ENCODE measurements at regions of chr19 and their contacts with region 1.

Region 1: DNA sequence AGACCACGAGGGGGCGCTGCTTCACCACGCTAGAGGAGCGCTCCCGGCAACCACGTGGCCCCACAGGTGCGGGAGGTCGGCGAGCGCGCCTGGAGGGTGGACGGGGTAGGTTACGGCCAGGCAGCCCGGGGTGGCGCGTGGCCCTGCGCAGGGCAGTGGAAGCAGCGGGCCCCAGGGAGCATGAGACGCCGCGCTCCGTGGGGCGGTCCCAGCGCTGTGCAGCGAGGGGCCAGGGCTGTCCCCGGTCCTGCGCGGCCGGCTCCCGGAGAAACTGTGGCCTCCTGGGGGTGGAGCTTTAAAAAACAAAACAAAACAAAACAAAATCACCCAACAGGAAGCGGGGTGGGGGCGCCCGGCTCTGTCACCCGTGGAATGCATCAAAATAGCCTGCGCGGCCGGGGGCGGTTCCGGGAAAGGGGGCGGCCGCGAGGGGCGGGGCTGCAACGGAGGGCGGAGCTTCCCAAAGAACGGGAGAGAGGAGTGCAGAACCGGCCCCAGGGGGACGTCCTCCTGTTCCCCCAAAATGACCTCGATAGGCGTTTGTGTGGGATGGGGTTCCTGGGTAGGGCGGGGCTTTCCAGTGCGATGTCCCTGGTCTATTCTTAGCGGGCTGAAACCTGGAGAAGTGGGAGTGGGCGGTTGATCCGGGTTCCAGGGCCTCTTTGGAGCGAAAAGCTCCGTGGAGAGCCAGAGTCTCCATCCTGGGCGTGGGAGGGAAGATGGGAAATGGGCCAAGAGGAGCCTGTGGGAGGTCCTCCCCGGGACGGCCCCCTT is 27.3 kb downstream of the NUMBL start:
- DNase-seq: peak; percentile 87 to 94 (median 91)
- H3K4me3 ChIP-seq: peak overlapping the region; percentile 52 to 75
- H3K4me3 Mint-ChIP-seq: peak overlapping the region; percentile 82 to 90 (median 86)
- H3K27ac ChIP-seq: peak overlapping the region; percentile 49
- H3K27ac Mint-ChIP-seq: peak overlapping the region; percentile 74 to 95 (median 90)
- H3K4me1 ChIP-seq: peaks cover 16% of the 10 kb centered on the region
- H3K4me1 Mint-ChIP-seq: peaks cover 4 to 14% (median 6%) of the 10 kb centered on the region in 4 donors
- H3K27me3 ChIP-seq: no peaks in the 10 kb centered on the region
- H3K27me3 Mint-ChIP-seq: no peaks in the 10 kb centered on the region

Region 2: GRCh38 chr19:40690693-40691420 is 27.7 kb after region 1 on chr19:
- CTCF ChIA-PET with region 1: no interaction called
- POLR2A ChIA-PET with region 1: interaction called, 13 read pairs
- intact Hi-C with region 1: no loop called
- DNase-seq: peak; percentile 78 to 85 (median 80)
- H3K4me3 ChIP-seq: peak overlapping the region; percentile 66 to 73
- H3K4me3 Mint-ChIP-seq: peak overlapping the region; percentile 85 to 94 (median 90)
- H3K27ac ChIP-seq: peak overlapping the region; percentile 60
- H3K27ac Mint-ChIP-seq: peak overlapping the region; percentile 61 to 97 (median 92)
- H3K4me1 ChIP-seq: peaks cover 8% of the 10 kb centered on the region
- H3K4me1 Mint-ChIP-seq: peaks cover 2 to 6% (median 4%) of the 10 kb centered on the region in 4 donors
- H3K27me3 ChIP-seq: no peaks in the 10 kb centered on the region
- H3K27me3 Mint-ChIP-seq: no peaks in the 10 kb centered on the region

Region 3: GRCh38 chr19:40750059-40750873 is 87.2 kb after region 1 on chr19 and contains the start of gene ACTMAP:
- CTCF ChIA-PET with region 1: interaction called, 6 read pairs
- POLR2A ChIA-PET with region 1: interaction called, 12 read pairs
- intact Hi-C with region 1: loop called (anchors 1 kb)
- DNase-seq: peak; percentile 100
- H3K4me3 ChIP-seq: peak within 1 kb of the TSS; percentile 81 to 98
- H3K4me3 Mint-ChIP-seq: peak within 1 kb of the TSS; percentile 95 to 100 (median 98)
- H3K27ac ChIP-seq: peak within 1 kb of the TSS; percentile 86
- H3K27ac Mint-ChIP-seq: peak within 1 kb of the TSS; percentile 89 to 99 (median 99)
- H3K4me1 ChIP-seq: peaks cover 42% of the 10 kb centered on the region
- H3K4me1 Mint-ChIP-seq: peaks cover 22 to 50% (median 31%) of the 10 kb centered on the region in 4 donors
- H3K27me3 ChIP-seq: no peaks in the 10 kb centered on the region
- H3K27me3 Mint-ChIP-seq: no peaks in the 10 kb centered on the region
- total RNA-seq, gene ACTMAP: 5.2 to 5.5 TPM

Region 4: DNA sequence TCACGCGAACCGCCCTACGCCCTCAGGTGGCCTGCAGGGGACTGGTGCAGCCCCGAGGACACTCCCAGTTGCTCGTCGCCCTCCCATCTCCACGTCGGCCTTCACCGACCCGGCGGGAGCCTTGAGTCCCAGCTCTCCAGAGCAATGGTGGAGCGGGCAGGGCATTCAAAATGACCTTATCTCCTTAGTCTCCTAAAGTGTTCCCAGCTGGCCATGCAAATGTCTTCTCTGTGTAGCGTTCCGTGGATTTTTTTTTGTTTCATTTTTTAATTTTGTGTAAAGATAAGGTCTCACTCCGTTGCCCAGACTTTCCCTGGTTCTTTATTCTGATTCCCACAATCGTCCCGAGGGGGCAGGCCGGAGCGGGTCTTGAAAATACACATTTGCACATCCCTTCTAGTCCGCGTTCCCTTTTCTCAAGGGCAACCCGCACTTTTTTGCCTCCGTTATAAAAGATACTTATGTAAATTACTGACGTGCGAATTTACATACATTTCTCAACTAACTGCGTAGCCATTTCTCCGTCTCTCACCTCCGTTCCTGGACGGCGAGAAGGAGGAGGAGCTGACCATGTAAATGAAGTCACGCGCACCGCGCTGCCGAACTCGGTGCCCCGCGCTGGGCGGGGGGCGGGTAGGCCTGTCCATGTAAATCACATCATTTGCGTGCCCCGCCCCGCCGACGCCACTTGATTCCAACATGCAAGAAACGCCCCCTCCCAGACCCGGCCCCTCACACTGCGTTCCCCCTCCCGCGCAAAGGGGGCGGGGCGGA is 135.3 kb after region 1 on chr19:
- CTCF ChIA-PET with region 1: interaction called, 8 read pairs
- POLR2A ChIA-PET with region 1: interaction called, 21 read pairs
- intact Hi-C with region 1: no loop called
- DNase-seq: peak; percentile 100
- H3K4me3 ChIP-seq: peak overlapping the region; percentile 55 to 86
- H3K4me3 Mint-ChIP-seq: peak overlapping the region; percentile 92 to 99 (median 96)
- H3K27ac ChIP-seq: peak overlapping the region; percentile 82
- H3K27ac Mint-ChIP-seq: peak overlapping the region; percentile 98 to 100 (median 99)
- H3K4me1 ChIP-seq: peaks cover 47% of the 10 kb centered on the region
- H3K4me1 Mint-ChIP-seq: peaks cover 30 to 55% (median 41%) of the 10 kb centered on the region in 4 donors
- H3K27me3 ChIP-seq: no peaks in the 10 kb centered on the region
- H3K27me3 Mint-ChIP-seq: no peaks in the 10 kb centered on the region

Region 5: DNA sequence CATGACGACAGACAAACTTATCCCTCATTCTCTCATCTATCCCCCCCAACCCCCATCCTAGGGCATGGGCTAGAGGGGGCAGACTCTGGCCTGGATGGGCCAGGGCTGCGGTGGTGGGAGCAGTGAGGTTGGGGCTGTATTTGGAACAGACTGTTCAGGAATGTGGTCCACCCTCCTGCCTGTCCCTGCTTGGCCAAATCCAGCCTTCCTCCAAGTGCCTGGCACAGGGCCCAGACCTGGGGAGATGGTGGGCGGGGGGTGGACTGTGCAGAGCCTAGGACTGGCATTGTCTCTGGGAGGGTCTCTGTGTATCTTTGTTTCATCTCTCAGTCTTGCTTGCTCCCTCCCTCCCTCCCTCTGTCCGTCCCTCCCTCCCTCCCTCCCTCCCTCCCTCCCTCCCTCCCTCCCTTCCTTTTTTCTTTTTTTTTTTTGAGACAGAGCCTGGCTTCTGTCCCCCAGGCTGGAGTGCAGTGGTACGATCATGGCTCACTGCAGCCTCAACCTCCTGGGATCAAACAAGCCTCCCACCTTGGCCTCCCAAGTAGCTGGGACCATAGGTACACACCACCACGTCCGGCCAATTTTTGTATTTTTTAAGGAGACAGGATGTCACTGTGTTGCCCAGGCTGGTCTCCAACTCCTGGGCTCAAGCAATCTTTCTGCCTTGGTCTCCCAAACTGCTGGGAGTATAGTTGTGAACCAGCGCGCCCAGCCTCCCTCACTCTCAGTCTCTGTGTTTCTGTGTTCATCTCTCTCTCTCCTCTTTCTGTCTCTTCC is 150.3 kb after region 1 on chr19:
- CTCF ChIA-PET with region 1: interaction called, 89 read pairs
- POLR2A ChIA-PET with region 1: interaction called, 34 read pairs
- intact Hi-C with region 1: no loop called
- DNase-seq: no peak
- H3K4me3 ChIP-seq: no peak overlapping the region
- H3K4me3 Mint-ChIP-seq: peak overlapping the region in 4 of 8 donors; percentile 41 to 97 (median 78)
- H3K27ac ChIP-seq: no peak overlapping the region
- H3K27ac Mint-ChIP-seq: peak overlapping the region; percentile 8 to 86 (median 49)
- H3K4me1 ChIP-seq: peaks cover 49% of the 10 kb centered on the region
- H3K4me1 Mint-ChIP-seq: peaks cover 18 to 58% (median 33%) of the 10 kb centered on the region in 4 donors
- H3K27me3 ChIP-seq: no peaks in the 10 kb centered on the region
- H3K27me3 Mint-ChIP-seq: no peaks in the 10 kb centered on the region

Region 6: DNA sequence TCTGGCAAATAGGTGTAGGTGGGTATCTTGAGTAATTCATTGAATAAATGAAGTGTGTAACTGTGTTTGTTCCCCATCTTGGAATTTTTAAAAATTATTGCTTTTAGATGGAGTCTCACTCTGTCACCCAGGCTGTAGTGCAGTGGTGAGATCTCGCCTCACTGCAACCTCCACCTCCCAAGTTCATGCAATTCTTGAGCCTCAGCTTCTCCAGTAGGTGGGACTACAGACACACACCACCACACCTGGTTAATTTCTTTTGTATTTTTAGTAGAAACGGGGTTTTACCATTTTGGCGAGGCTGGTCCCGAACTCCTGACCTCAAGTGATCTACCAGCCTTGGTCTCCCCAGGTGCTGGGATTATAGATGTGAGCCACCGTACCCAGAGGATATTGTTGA is 195.0 kb after region 1 on chr19:
- CTCF ChIA-PET with region 1: no interaction called
- POLR2A ChIA-PET with region 1: no interaction called
- intact Hi-C with region 1: no loop called
- DNase-seq: no peak
- H3K4me3 ChIP-seq: no peak overlapping the region
- H3K4me3 Mint-ChIP-seq: no peak overlapping the region
- H3K27ac ChIP-seq: no peak overlapping the region
- H3K27ac Mint-ChIP-seq: no peak overlapping the region
- H3K4me1 ChIP-seq: no peaks in the 10 kb centered on the region
- H3K4me1 Mint-ChIP-seq: no peaks in the 10 kb centered on the region
- H3K27me3 ChIP-seq: no peaks in the 10 kb centered on the region
- H3K27me3 Mint-ChIP-seq: peaks cover 3% of the 10 kb centered on the region in 2 donors

Region 7: GRCh38 chr19:40908976-40909375 is 245.9 kb after region 1 on chr19:
- CTCF ChIA-PET with region 1: no interaction called
- POLR2A ChIA-PET with region 1: interaction called, 4 read pairs
- intact Hi-C with region 1: loop called (anchors 1 kb)
- DNase-seq: peak in 3 of 5 donors; percentile 39 to 52 (median 44)
- H3K4me3 ChIP-seq: peak overlapping the region in 1 of 2 donors; percentile 20
- H3K4me3 Mint-ChIP-seq: peak overlapping the region in 6 of 8 donors; percentile 81 to 89 (median 85)
- H3K27ac ChIP-seq: no peak overlapping the region
- H3K27ac Mint-ChIP-seq: peak overlapping the region in 3 of 7 donors; percentile 55 to 94 (median 79)
- H3K4me1 ChIP-seq: peaks cover 14% of the 10 kb centered on the region
- H3K4me1 Mint-ChIP-seq: peaks cover 10 to 18% (median 15%) of the 10 kb centered on the region in 4 donors
- H3K27me3 ChIP-seq: no peaks in the 10 kb centered on the region
- H3K27me3 Mint-ChIP-seq: peaks cover 12 to 18% of the 10 kb centered on the region in 2 donors

Region 8: DNA sequence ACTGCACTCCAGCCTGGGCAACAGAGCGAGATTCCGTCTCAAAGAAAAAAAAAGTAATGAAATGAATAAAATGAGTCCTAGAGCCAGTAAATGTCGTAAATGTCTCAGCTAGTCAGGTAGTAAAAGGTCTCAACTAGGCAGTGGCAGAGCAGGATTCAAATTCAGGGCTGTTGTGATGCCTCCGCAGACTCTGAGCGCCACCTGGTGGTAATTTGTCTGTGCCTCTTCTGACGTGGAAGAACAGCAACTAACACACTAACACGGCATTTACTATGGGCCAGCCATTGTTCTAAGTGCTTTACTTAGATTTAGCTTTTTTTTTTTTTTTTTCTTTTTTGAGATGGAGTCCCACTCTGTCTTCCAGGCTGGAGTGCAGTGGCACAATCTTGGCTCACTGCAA is 481.3 kb after region 1 on chr19:
- CTCF ChIA-PET with region 1: interaction called, 27 read pairs
- POLR2A ChIA-PET with region 1: interaction called, 11 read pairs
- intact Hi-C with region 1: no loop called
- DNase-seq: peak; percentile 85 to 88 (median 86)
- H3K4me3 ChIP-seq: no peak overlapping the region
- H3K4me3 Mint-ChIP-seq: no peak overlapping the region
- H3K27ac ChIP-seq: no peak overlapping the region
- H3K27ac Mint-ChIP-seq: peak overlapping the region in 5 of 7 donors; percentile 39 to 84 (median 81)
- H3K4me1 ChIP-seq: no peaks in the 10 kb centered on the region
- H3K4me1 Mint-ChIP-seq: peaks cover 0 to 2% (median under 1%) of the 10 kb centered on the region in 4 donors
- H3K27me3 ChIP-seq: no peaks in the 10 kb centered on the region
- H3K27me3 Mint-ChIP-seq: peaks cover 6 to 11% of the 10 kb centered on the region in 2 donors